ENCODE measurements at regions of chrX and their contacts with region 1.

Region 1: DNA sequence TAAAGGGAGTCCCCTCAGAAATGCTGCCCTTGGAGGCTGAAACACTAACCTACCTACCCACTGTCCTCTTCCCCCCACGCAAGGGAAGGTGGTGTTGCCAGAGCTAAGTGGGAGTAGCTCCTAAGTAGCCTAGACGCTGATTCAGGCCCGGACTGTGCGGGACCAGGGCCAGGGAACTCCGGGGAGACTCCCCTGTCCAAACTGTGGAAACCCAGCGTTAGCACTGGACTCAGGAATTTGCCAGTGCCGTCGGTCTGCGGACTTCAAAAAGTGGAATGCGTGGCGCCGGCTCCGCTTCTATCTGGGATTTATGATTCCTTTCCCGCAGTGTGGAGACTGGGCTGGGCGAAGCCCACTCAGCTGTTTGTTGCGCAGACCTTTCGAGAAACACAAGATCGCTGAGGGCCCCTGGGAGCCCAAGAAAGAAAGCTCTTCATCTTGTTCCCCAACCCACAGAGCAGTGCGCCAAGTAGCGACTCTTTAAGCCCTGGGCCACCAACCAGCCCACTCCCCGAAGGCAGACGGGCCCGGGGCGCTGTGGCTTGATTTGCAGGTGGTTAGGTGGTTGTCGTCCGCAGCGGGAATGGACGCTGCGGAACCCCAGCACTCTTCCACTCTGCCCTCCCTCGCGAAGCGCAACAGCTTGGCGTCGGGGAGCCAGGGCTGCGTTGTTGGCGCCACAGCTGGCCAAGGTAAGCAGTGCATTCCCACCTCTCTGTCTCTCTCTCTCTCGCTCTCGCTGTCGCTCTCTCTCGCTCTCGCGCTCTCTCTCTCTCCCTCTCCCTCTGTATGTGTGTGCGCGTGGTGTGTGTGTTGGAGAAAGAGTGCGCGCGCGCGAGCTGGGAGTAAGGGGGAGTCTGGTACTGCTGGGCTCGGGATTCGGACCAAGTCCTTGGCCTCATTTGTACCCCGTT is 2.0 kb downstream of the TMEM255A start:
- DNase-seq: peak; percentile 39 to 78 (median 63)
- ATAC-seq: peak; percentile 97
- H3K4me3 ChIP-seq: peak overlapping the region; percentile 74
- H3K4me3 Mint-ChIP-seq: peak overlapping the region; percentile 81 to 91 (median 87)
- H3K27ac ChIP-seq: no peak overlapping the region
- H3K27ac Mint-ChIP-seq: peak overlapping the region; percentile 18 to 96 (median 88)
- H3K4me1 ChIP-seq: peaks cover 0 to 2% of the 10 kb centered on the region in 2 donors
- H3K4me1 Mint-ChIP-seq: peaks cover 8 to 31% (median 15%) of the 10 kb centered on the region in 7 donors
- H3K27me3 ChIP-seq: peaks cover 0 to 3% of the 10 kb centered on the region in 2 donors
- H3K27me3 Mint-ChIP-seq: peaks cover 16 to 78% (median 26%) of the 10 kb centered on the region in 5 donors

Region 2: GRCh38 chrX:120269373-120270035 is 39.7 kb before region 1 on chrX:
- CTCF ChIA-PET with region 1: no interaction called
- POLR2A ChIA-PET with region 1: interaction called, 5 read pairs
- intact Hi-C with region 1: loop called in 1 of 2 experiments (anchors 2 kb)
- DNase-seq: peak in 7 of 9 donors; percentile 4 to 58 (median 31)
- ATAC-seq: peak; percentile 98
- H3K4me3 ChIP-seq: no peak overlapping the region
- H3K4me3 Mint-ChIP-seq: peak overlapping the region in 2 of 10 donors; percentile 20 to 44
- H3K27ac ChIP-seq: peak overlapping the region; percentile 38
- H3K27ac Mint-ChIP-seq: peak overlapping the region; percentile 34 to 88 (median 76)
- H3K4me1 ChIP-seq: peaks cover 0 to 12% of the 10 kb centered on the region in 2 donors
- H3K4me1 Mint-ChIP-seq: peaks cover 2 to 17% (median 14%) of the 10 kb centered on the region in 7 donors
- H3K27me3 ChIP-seq: no peaks in the 10 kb centered on the region
- H3K27me3 Mint-ChIP-seq: peaks cover 0 to 4% (median 0%) of the 10 kb centered on the region in 5 donors

Region 3: GRCh38 chrX:120365320-120365719 is 56.1 kb after region 1 on chrX:
- CTCF ChIA-PET with region 1: no interaction called
- POLR2A ChIA-PET with region 1: no interaction called
- intact Hi-C with region 1: loop called in 1 of 2 experiments (anchors 10 kb)
- DNase-seq: peak in 7 of 9 donors; percentile 5 to 28 (median 14)
- ATAC-seq: peak; percentile 60
- H3K4me3 ChIP-seq: no peak overlapping the region
- H3K4me3 Mint-ChIP-seq: no peak overlapping the region
- H3K27ac ChIP-seq: no peak overlapping the region
- H3K27ac Mint-ChIP-seq: no peak overlapping the region
- H3K4me1 ChIP-seq: no peaks in the 10 kb centered on the region
- H3K4me1 Mint-ChIP-seq: no peaks in the 10 kb centered on the region
- H3K27me3 ChIP-seq: no peaks in the 10 kb centered on the region
- H3K27me3 Mint-ChIP-seq: peaks cover 0 to 4% (median 0%) of the 10 kb centered on the region in 5 donors

Region 4: GRCh38 chrX:120468825-120469525 is 159.8 kb after region 1 on chrX and contains the start of gene LAMP2:
- CTCF ChIA-PET with region 1: no interaction called
- POLR2A ChIA-PET with region 1: no interaction called
- intact Hi-C with region 1: loop called in 1 of 2 experiments (anchors 5 kb)
- DNase-seq: peak; percentile 58 to 78 (median 72)
- ATAC-seq: peak; percentile 99
- H3K4me3 ChIP-seq: peak within 1 kb of the TSS; percentile 79
- H3K4me3 Mint-ChIP-seq: peak within 1 kb of the TSS; percentile 89 to 99 (median 94)
- H3K27ac ChIP-seq: peak within 1 kb of the TSS; percentile 80
- H3K27ac Mint-ChIP-seq: peak within 1 kb of the TSS; percentile 76 to 94 (median 92)
- H3K4me1 ChIP-seq: peaks cover 0 to 7% of the 10 kb centered on the region in 2 donors
- H3K4me1 Mint-ChIP-seq: peaks cover 5 to 40% (median 29%) of the 10 kb centered on the region in 7 donors
- H3K27me3 ChIP-seq: no peaks in the 10 kb centered on the region
- H3K27me3 Mint-ChIP-seq: no peaks in the 10 kb centered on the region
- total RNA-seq, gene LAMP2: 22.5 to 60.3 (median 44.9) TPM

Region 5: GRCh38 chrX:121165930-121166359 is 856.7 kb after region 1 on chrX:
- CTCF ChIA-PET with region 1: no interaction called
- POLR2A ChIA-PET with region 1: no interaction called
- intact Hi-C with region 1: no loop called
- DNase-seq: no peak
- ATAC-seq: no peak
- H3K4me3 ChIP-seq: no peak overlapping the region
- H3K4me3 Mint-ChIP-seq: no peak overlapping the region
- H3K27ac ChIP-seq: no peak overlapping the region
- H3K27ac Mint-ChIP-seq: peak overlapping the region in 1 of 9 donors; percentile 40
- H3K4me1 ChIP-seq: no peaks in the 10 kb centered on the region
- H3K4me1 Mint-ChIP-seq: peaks cover 0 to 16% (median 11%) of the 10 kb centered on the region in 7 donors
- H3K27me3 ChIP-seq: no peaks in the 10 kb centered on the region
- H3K27me3 Mint-ChIP-seq: peaks cover 0 to 2% (median 0%) of the 10 kb centered on the region in 5 donors

Region 6: GRCh38 chrX:122252454-122252853 is 1943.2 kb after region 1 on chrX:
- CTCF ChIA-PET with region 1: no interaction called
- POLR2A ChIA-PET with region 1: no interaction called
- intact Hi-C with region 1: no loop called
- DNase-seq: no peak
- ATAC-seq: no peak
- H3K4me3 ChIP-seq: no peak overlapping the region
- H3K4me3 Mint-ChIP-seq: no peak overlapping the region
- H3K27ac ChIP-seq: no peak overlapping the region
- H3K27ac Mint-ChIP-seq: no peak overlapping the region
- H3K4me1 ChIP-seq: no peaks in the 10 kb centered on the region
- H3K4me1 Mint-ChIP-seq: no peaks in the 10 kb centered on the region
- H3K27me3 ChIP-seq: no peaks in the 10 kb centered on the region
- H3K27me3 Mint-ChIP-seq: no peaks in the 10 kb centered on the region